ENCODE measurements at regions of chr15 and their contacts with region 1.

Region 1: GRCh38 chr15:71443538-71443937 is 328.3 kb downstream of the THSD4 start:
- DNase-seq: peak; percentile 69
- ATAC-seq: peak; percentile 41

Region 2: GRCh38 chr15:71011503-71012155 is 431.9 kb before region 1 on chr15:
- intact Hi-C with region 1: loop called (anchors 5 kb)
- DNase-seq: no peak
- ATAC-seq: peak; percentile 82

Region 3: GRCh38 chr15:71386448-71387236 is 56.9 kb before region 1 on chr15:
- intact Hi-C with region 1: loop called (anchors 5 kb)
- DNase-seq: no peak
- ATAC-seq: peak; percentile 69

Region 4: GRCh38 chr15:71691458-71692417 is 248.2 kb after region 1 on chr15:
- intact Hi-C with region 1: no loop called
- DNase-seq: no peak
- ATAC-seq: peak; percentile 78

Measured in Right ventricle myocardium superior (tissue), 1 donor.